ENCODE measurements at regions of chr17 and their contacts with region 1.

Region 1: GRCh38 chr17:31629696-31630470 is 229.2 kb downstream of the COPRS start:
- DNase-seq: peak; percentile 71
- ATAC-seq: peak; percentile 9; the same call in 1 of the 2 replicates
- H3K4me3 ChIP-seq: no peak overlapping the region
- H3K27ac ChIP-seq: peak overlapping the region; percentile 46; the same call in 1 of the 2 replicates
- H3K4me1 ChIP-seq: peaks cover 8% of the 10 kb centered on the region
- H3K27me3 ChIP-seq: no peaks in the 10 kb centered on the region
- CTCF ChIP-seq: no peak
- POLR2A ChIP-seq: no peak
- RAD21 ChIP-seq: no peak

Region 2: DNA sequence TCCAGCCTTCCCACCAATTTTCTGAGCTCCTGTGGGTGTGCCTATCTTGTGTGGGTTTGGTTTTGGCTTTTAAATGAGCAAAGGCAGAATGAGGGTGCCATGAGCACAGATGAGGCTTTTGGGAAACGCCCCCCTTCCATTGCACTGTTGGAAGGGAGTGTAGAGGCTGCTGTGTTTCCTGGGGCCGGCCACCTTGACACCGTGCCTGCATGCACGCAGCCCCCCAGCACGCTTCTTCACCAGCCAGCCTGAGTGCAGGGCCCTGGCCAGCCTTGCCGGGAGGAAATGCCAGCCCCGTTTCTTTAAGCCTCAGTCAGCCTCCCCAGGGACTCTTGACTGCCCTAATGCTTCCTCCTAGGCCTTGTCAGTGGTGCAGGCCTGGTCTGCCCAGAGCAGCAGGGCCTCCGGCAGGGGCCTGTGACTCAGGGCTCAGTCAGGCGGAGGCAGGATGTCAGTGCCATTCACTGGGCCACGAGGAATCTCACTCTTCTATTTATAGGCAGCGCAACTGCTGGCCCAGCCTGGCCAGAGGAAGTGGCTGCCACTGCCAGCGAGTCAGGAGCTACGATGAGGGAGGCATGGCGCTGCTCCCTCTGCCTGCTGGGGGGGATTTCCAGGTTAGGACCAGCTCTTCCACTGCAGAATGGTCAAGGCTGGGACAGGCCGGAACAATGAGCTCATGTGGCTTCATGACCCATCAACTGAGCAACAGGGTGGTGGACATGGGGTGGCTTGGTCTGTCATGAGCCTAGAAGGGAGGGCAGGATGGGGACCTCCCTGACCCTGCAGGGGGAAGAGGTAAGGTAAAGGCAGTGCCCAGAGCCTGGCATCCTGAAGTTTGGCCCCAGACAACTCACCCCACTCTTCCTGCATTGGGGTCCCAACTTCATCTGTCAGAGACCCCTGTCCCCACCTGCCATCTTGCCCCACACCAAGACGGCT is 33.2 kb before region 1 on chr17:
- CTCF ChIA-PET with region 1: no interaction called
- POLR2A ChIA-PET with region 1: no interaction called
- dilution Hi-C with region 1: no loop called
- in situ Hi-C with region 1: no loop called
- intact Hi-C with region 1: loop called (anchors 1 kb)
- DNase-seq: peak; percentile 98
- ATAC-seq: peak; percentile 94
- H3K4me3 ChIP-seq: no peak overlapping the region
- H3K27ac ChIP-seq: peak overlapping the region; percentile 96
- H3K4me1 ChIP-seq: peaks cover 40% of the 10 kb centered on the region
- H3K27me3 ChIP-seq: no peaks in the 10 kb centered on the region
- CTCF ChIP-seq: peak; percentile 15; the same call in 1 of the 2 replicates
- POLR2A ChIP-seq: peak; percentile 64; the same call in 1 of the 2 replicates
- RAD21 ChIP-seq: peak; percentile 40

Region 3: DNA sequence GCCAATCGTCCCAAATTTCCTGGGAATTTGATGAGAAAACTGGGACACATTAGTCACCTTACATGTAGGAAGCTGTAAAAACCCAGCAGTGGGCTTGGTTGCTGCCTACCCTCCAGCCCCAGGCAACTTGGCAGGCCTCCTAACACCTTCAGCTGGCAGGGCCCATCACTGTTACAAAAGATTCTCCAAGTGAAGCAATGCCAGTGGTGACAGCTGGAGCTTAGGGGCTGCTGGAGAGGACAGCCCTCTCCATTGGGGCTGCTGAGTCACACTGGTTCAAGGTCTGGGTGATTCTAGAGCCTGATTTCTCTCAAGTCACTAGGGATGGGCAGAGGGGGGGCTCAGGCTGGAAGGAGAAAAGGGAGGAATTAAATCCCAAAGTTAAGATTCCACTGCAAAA is 48.5 kb after region 1 on chr17:
- CTCF ChIA-PET with region 1: no interaction called
- POLR2A ChIA-PET with region 1: no interaction called
- dilution Hi-C with region 1: no loop called
- in situ Hi-C with region 1: loop called (anchors 5 kb)
- intact Hi-C with region 1: no loop called
- DNase-seq: peak; percentile 41
- ATAC-seq: peak; percentile 66
- H3K4me3 ChIP-seq: no peak overlapping the region
- H3K27ac ChIP-seq: no peak overlapping the region
- H3K4me1 ChIP-seq: peaks cover 7% of the 10 kb centered on the region
- H3K27me3 ChIP-seq: no peaks in the 10 kb centered on the region
- CTCF ChIP-seq: no peak
- POLR2A ChIP-seq: no peak
- RAD21 ChIP-seq: no peak